Aorta (tissue), 5 donors: ENCODE measurements at regions of chr10 and their contacts with region 1.

Region 1: DNA sequence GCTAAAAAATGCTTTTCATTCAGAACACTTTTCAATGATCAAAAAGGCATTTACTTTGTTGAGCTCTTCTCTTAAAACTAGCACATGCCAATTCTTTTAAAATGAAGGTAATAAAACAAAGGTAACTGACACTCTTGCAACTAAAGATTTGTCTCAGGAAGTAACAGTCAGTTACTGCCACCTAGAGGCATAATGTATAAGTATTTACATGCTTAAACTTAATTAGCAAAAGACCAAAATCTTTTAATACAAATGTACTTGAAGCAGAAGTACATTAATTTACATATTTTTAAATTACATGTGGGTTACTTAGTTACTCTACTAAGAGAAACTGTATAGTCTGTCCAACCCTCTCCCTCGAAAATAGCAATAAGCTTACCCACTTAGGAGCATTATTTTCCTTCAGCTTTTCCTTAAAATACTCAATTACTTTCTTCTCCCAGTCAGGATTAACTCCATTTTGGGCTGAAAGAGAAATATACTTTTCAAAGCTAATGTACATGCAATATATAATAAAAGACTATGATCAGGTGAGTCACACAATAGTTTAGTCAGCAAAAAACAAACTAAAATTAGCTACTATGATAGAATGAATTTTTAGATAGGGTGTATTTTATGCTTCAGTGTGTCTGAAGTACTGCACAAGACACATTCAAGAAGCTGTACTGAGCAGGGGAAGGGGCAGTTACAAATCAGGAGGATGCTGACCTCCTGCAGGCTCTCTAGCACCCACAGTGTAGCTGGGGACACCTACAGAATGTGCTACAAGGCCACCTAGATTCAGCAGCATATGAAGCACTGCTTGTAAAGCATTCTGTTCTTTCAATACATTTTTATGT is 13.0 kb downstream of the MCMBP start:
- DNase-seq: no peak
- ATAC-seq: no peak
- H3K4me3 ChIP-seq: no peak overlapping the region
- H3K27ac ChIP-seq: no peak overlapping the region
- H3K4me1 ChIP-seq: no peaks in the 10 kb centered on the region
- H3K27me3 ChIP-seq: no peaks in the 10 kb centered on the region

Region 2: GRCh38 chr10:119608316-119609155 is 251.1 kb before region 1 on chr10:
- intact Hi-C with region 1: loop called (anchors 5 kb)
- DNase-seq: peak; percentile 53 to 82
- ATAC-seq: no peak
- H3K4me3 ChIP-seq: no peak overlapping the region
- H3K27ac ChIP-seq: no peak overlapping the region
- H3K4me1 ChIP-seq: no peaks in the 10 kb centered on the region
- H3K27me3 ChIP-seq: no peaks in the 10 kb centered on the region

Region 3: DNA sequence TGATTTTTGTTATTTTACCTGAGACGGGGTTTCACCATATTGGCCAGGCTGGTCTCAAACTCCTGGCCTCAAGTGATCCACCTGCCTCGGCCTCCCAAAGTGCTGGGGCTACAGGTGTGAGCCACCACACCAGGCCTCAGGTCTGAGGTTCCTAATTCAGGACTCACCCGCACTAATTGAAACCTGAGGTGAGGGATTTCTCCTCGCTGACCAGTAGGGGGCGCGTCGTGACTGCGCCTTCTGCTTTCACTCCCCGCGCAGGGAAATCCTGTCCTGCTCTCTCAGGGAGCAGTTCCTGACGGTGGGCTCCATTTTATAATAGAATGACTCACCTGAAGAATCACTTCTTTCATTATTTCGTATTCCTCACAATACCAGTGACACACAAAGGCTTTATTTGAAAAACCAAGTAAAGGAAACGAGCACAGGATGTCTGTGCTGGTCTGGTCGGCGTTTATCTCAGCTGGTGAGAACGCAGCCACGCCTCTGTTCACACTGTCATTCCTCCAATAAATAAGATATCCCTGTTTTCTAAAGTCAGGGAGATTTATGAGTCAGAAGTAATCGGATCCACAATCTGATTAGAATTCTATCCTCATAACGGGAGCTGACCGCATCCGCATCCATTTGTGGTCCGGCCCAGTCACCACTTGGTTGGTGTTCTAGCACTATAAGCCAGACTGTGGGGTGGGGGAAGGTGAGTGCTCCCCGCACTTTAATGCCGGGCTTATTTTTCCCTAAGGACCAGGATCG is 173.0 kb before region 1 on chr10:
- intact Hi-C with region 1: loop called (anchors 1 to 5 kb)
- DNase-seq: peak; percentile 90 to 94
- ATAC-seq: peak; percentile 94
- H3K4me3 ChIP-seq: no peak overlapping the region
- H3K27ac ChIP-seq: no peak overlapping the region
- H3K4me1 ChIP-seq: no peaks in the 10 kb centered on the region
- H3K27me3 ChIP-seq: no peaks in the 10 kb centered on the region

Region 4: DNA sequence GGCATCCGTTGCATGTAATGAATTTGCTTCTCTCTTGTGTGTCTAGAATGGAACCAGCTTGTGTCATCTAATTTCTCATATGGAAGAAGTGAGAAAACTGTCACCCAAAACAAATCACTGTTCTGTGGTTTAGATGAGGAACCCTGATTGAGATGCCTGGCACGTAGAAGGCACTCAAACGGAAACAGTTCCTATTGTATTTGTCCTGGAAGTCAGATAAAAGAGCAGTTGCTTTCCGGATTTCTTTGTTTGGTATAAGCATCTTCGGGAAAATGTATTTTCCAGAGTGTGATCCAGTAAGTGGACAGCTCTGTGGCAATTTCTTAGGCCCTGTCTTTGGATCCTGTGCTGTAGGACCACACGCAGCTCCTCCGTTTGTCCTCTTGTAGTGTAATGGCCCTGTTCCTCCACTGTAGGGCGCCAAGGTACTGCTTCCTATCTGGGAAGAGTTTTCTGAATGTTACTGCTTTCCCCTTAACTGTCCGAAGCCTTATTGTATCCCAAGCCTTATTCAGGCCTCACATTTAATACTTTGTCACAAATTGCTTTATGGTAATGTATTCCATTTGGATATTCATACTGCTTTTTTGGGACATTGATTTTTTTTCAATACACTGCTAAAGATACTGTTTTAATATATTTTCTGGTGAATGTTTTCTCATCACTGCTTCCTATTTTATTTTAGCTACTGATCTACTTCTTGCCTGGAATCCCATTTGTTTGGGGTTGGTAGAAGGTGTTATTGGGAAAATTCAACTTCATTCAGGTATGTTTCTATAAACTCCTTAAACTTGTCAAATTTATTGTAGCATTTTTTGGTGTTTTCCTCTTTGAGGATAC is 109.0 kb before region 1 on chr10:
- intact Hi-C with region 1: loop called (anchors 2 kb)
- DNase-seq: peak in 1 of 2 donors; percentile 76
- ATAC-seq: peak; percentile 94
- H3K4me3 ChIP-seq: no peak overlapping the region
- H3K27ac ChIP-seq: no peak overlapping the region
- H3K4me1 ChIP-seq: no peaks in the 10 kb centered on the region
- H3K27me3 ChIP-seq: no peaks in the 10 kb centered on the region